ENCODE measurements at regions of chr6 and their contacts with region 1.

Region 1: GRCh38 chr6:150891888-150892485 is 26.5 kb downstream of the MTHFD1L start:
- DNase-seq: no peak
- H3K4me3 ChIP-seq: no peak overlapping the region
- H3K27ac ChIP-seq: no peak overlapping the region
- H3K4me1 ChIP-seq: peaks cover 7% of the 10 kb centered on the region
- H3K27me3 ChIP-seq: no peaks in the 10 kb centered on the region
- CTCF ChIP-seq: peak; percentile 85 to 87 (median 85)
- POLR2A ChIP-seq: no peak

Region 2: DNA sequence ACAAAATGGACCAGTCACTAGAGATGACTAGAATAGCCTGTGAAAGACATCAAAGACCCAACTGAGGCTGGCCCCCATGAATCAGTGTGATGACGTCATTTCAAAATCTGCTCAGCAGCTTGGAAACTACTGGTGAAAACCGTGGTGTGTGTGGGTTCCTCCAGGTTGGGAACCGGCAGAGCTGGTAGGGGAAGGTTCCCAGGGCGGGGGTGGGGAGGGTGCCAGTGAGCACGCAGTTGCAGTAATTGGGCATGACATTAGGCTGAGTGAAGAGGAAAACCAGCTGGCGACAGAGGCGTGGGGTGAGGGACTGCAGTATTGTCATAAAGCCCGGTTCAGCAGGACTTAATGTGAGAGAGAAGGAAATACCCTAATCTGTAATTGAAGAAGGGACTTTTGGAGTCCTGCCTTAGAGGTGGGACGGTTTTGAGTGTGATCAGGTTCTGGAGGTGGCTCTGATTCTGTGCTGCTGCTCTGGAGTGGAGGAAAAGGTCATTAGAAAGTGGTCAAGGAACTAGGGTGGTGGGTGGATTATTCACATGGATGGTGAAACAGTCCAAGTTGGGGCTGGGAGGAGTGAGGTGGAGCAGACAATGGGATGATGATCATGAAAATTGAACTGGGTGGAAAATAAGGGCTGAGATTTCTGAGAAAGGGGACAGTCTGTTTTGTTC is 78.5 kb before region 1 on chr6:
- intact Hi-C with region 1: no loop called
- DNase-seq: no peak
- H3K4me3 ChIP-seq: no peak overlapping the region
- H3K27ac ChIP-seq: no peak overlapping the region
- H3K4me1 ChIP-seq: peaks cover 5% of the 10 kb centered on the region
- H3K27me3 ChIP-seq: no peaks in the 10 kb centered on the region
- CTCF ChIP-seq: no peak
- POLR2A ChIP-seq: no peak

Region 3: DNA sequence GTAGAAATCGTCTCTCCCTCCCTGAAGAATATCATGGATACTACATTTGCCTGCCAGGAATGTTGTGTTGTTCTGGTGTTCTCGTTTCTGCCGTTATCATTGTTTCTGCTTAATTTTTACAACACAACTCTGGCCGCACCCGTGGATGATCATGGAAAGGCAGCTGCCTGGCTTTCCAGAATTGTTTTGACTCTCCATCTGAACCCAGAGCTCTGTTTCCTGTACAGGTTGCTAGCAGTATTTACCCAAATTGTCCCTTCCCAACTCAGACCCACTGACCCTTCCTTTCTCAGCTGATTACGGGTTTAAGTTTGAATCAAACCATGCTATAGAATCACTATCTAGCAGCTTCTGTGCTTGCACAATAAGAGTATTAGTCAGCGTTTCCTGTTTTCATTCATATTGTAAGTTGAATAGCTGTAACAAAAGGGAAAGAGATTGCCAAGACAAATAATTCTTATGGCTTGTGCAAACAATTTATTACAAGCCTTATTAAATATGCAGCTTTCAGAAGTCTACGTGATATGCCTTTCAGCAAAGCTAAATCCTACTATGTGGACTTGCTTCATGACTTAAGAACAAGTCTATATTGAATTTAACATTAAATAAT is 112.5 kb after region 1 on chr6:
- intact Hi-C with region 1: loop called (anchors 10 kb)
- DNase-seq: no peak
- H3K4me3 ChIP-seq: no peak overlapping the region
- H3K27ac ChIP-seq: peak overlapping the region; percentile 43
- H3K4me1 ChIP-seq: peaks cover 6% of the 10 kb centered on the region
- H3K27me3 ChIP-seq: no peaks in the 10 kb centered on the region
- CTCF ChIP-seq: no peak
- POLR2A ChIP-seq: no peak

Region 4: DNA sequence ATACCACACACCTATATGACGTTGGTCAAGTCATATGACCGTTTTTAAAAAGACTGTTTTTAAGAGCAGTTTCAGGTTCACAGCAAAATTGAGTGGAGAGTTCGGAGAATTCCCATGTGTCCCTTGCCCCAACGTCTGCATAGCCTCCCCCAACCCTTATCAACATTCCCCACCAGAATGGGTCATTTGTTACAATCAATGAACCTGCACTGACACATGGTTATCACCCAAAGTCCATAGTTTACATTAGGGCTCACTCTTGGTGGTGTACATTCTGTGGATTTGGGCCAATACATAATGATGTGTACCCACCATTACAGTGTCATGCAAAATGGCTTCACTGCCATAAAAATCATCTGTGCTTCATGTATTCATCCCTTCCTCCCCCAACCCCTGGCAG is 447.4 kb after region 1 on chr6:
- intact Hi-C with region 1: loop called (anchors 5 kb)
- DNase-seq: no peak
- H3K4me3 ChIP-seq: no peak overlapping the region
- H3K27ac ChIP-seq: no peak overlapping the region
- H3K4me1 ChIP-seq: no peaks in the 10 kb centered on the region
- H3K27me3 ChIP-seq: no peaks in the 10 kb centered on the region
- CTCF ChIP-seq: no peak
- POLR2A ChIP-seq: no peak

Measured in vagina (tissue), 2 donors.